ENCODE measurements at regions of chr12 and their contacts with region 1.

Region 1: GRCh38 chr12:113334786-113335540 is at the start of gene SLC8B1:
- H3K4me3 Mint-ChIP-seq: peak within 1 kb of the TSS; percentile 99
- H3K27ac Mint-ChIP-seq: peak within 1 kb of the TSS; percentile 96
- H3K4me1 Mint-ChIP-seq: peaks cover 57% of the 10 kb centered on the region
- H3K27me3 Mint-ChIP-seq: no peaks in the 10 kb centered on the region

Region 2: DNA sequence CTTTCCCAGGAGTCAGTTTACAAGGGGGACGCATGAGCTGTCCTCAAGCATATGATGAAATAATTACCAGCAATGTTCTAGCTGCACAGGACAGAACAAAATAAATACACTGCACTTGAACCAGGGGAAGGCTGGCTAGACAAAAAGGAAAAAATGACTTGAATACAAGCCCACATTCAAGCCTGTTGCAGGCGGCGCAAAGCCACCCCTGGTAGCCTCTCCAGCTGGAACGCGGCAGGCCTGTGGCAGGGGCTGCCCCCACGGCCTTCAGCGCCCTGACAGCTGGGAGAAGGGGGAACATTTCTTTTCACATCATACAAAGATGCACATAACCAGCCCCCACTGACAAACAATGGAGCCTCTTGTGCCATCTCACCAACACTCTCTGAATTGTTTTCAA is 1152.5 kb before region 1 on chr12:
- intact Hi-C with region 1: no loop called
- H3K4me3 Mint-ChIP-seq: no peak overlapping the region
- H3K27ac Mint-ChIP-seq: no peak overlapping the region
- H3K4me1 Mint-ChIP-seq: no peaks in the 10 kb centered on the region
- H3K27me3 Mint-ChIP-seq: no peaks in the 10 kb centered on the region

Region 3: DNA sequence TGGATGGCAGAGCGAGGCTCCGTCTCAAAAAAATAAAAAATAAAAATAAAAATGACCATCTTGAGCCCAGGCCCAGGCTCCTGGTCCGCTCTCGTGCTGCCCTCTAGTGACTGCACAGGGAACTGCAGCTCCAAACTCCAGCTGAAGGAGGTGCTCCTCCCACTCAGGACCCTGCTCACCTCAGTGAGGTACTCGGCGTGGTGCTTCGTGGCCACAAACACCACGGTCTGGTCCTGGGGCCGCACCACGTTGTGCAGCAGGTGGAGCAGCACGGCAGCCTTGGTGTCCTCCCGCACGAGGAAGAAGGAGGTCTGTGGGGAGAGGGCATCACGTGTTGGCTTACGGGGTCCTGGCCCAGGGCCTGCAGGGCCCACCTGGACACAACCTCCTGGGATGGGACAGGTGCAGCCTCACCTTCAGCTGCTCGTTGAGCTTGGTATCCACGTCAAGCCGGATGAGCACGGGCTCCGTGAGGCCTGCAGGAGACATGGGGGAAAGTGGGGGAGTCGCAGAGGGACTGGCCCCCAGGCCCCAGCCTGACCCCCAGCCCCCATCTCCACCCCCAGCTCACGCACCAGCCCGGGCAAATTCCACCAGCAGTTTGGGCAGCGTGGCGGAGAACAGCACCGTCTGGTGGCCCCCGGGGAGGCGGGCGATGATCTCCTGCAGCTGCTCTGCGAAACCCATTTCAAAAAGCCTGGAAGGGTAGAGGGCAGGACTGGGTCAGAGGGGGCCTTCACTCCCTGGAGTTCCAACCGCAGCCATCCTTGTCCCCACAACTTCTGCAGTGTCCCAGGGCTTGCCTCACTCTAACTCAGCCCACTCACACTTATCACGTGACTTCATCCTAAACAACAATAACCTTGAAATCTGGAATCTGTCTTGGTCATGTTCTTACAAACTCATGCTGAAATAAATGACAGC is 160.2 kb before region 1 on chr12:
- intact Hi-C with region 1: no loop called
- H3K4me3 Mint-ChIP-seq: no peak overlapping the region
- H3K27ac Mint-ChIP-seq: peak overlapping the region; percentile 7
- H3K4me1 Mint-ChIP-seq: peaks cover 9% of the 10 kb centered on the region
- H3K27me3 Mint-ChIP-seq: no peaks in the 10 kb centered on the region

Region 4: GRCh38 chr12:113322343-113322742 is 12.6 kb before region 1 on chr12:
- intact Hi-C with region 1: loop called (anchors 1 kb)
- H3K4me3 Mint-ChIP-seq: no peak overlapping the region
- H3K27ac Mint-ChIP-seq: peak overlapping the region; percentile 88
- H3K4me1 Mint-ChIP-seq: peaks cover 34% of the 10 kb centered on the region
- H3K27me3 Mint-ChIP-seq: no peaks in the 10 kb centered on the region

Region 5: GRCh38 chr12:113358381-113359132 is 23.6 kb after region 1 on chr12 and contains the start of gene PLBD2:
- intact Hi-C with region 1: loop called (anchors 1 kb)
- H3K4me3 Mint-ChIP-seq: peak within 1 kb of the TSS; percentile 90
- H3K27ac Mint-ChIP-seq: peak within 1 kb of the TSS; percentile 84
- H3K4me1 Mint-ChIP-seq: peaks cover 33% of the 10 kb centered on the region
- H3K27me3 Mint-ChIP-seq: no peaks in the 10 kb centered on the region

Region 6: DNA sequence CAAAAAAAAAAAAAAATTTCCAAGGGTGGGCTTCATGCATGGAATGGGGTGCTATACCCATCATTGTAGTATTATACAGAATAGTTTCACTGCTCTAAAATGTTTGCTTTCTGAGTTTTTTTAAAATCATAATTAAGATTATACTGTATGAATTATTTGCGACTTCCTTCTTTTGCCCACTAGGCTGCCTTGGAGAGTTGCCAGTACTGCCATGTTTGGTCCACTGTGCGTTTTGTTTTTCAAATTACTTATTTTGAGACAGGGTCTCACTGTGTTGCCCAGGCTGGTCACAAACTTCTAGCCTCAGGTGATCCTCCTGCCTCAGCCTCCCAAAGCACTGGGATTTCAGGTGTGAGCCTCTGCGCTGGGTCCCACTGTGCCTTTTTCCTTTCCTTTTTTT is 43.3 kb after region 1 on chr12:
- intact Hi-C with region 1: no loop called
- H3K4me3 Mint-ChIP-seq: no peak overlapping the region
- H3K27ac Mint-ChIP-seq: no peak overlapping the region
- H3K4me1 Mint-ChIP-seq: no peaks in the 10 kb centered on the region
- H3K27me3 Mint-ChIP-seq: no peaks in the 10 kb centered on the region

Region 7: DNA sequence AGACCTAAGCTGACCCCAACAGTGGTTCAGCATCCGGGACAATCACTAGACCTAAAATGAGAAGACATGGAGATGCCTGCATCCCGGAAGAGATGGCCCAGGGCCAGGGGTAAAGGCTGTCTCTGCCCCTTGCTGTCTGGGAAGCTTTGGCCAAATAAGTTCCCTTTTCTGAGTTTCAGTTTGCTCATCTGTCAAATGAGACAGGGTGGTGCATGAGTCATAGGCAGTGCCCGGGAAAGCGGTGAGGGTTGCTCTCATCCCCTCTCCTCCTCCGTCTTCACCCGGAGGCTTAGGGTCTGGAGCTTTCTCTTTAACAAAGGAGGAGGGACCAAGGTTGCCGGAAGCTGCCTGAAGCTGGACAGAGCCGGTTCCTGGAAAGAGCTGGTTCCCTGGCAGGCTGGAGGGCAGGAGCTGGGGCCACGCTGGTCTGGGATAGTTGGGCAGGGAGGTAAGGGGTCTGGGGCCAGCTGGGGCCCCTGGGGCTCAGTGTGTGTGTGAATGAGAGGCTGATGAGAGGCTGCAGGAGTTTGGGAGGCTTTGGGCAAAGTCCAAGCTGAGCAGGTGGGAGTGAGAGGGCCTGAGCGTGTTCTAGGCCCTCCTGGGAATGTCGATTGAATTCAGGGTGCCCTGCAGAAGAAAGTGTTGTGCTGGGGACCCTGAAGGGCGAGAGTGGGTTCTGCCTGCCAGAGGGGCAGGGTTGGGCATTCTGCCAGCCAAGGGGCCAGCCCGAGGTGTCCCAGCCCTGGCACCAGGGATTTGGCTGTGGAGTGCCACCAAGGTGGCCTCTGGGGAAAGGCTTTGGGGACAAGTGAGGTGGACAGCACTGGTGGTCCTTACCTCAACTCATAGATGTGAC is 87.3 kb after region 1 on chr12 and contains the start of gene SDSL:
- intact Hi-C with region 1: loop called (anchors 1 kb)
- H3K4me3 Mint-ChIP-seq: peak within 1 kb of the TSS; percentile 97
- H3K27ac Mint-ChIP-seq: peak within 1 kb of the TSS; percentile 97
- H3K4me1 Mint-ChIP-seq: peaks cover 73% of the 10 kb centered on the region
- H3K27me3 Mint-ChIP-seq: peaks cover 1% of the 10 kb centered on the region

Measured in dendritic cell treated with granulocyte-macrophage colony-stimulating factor and Interleukin-4, amounts not matched to agents 40 ng/mL and 50 ng/mL, for 4 days (primary cell).